ENCODE measurements at regions of chr22 and their contacts with region 1.

Region 1: GRCh38 chr22:43014869-43015676 is at the start of gene PACSIN2:
- DNase-seq: peak; percentile 93 to 99
- H3K4me3 ChIP-seq: peak within 1 kb of the TSS; percentile 67 to 87 (median 86)
- H3K27ac ChIP-seq: 0 out of 2 replicates have a peak within 1 kb of the TSS, but pooled peaks have one; percentile 51
- H3K4me1 ChIP-seq: peaks cover 7 to 16% (median 10%) of the 10 kb centered on the region in 4 experiments
- H3K27me3 ChIP-seq: peaks cover 0 to 5% (median 3%) of the 10 kb centered on the region in 4 experiments; a peak in 4 of 7 replicates
- CTCF ChIP-seq: no peak
- EP300 ChIP-seq: no peak
- POLR2A ChIP-seq: peak; percentile 97 to 100
- RAD21 ChIP-seq: no peak
- total RNA-seq, gene PACSIN2: 62.6 and 64.2 TPM in 2 replicates

Region 2: DNA sequence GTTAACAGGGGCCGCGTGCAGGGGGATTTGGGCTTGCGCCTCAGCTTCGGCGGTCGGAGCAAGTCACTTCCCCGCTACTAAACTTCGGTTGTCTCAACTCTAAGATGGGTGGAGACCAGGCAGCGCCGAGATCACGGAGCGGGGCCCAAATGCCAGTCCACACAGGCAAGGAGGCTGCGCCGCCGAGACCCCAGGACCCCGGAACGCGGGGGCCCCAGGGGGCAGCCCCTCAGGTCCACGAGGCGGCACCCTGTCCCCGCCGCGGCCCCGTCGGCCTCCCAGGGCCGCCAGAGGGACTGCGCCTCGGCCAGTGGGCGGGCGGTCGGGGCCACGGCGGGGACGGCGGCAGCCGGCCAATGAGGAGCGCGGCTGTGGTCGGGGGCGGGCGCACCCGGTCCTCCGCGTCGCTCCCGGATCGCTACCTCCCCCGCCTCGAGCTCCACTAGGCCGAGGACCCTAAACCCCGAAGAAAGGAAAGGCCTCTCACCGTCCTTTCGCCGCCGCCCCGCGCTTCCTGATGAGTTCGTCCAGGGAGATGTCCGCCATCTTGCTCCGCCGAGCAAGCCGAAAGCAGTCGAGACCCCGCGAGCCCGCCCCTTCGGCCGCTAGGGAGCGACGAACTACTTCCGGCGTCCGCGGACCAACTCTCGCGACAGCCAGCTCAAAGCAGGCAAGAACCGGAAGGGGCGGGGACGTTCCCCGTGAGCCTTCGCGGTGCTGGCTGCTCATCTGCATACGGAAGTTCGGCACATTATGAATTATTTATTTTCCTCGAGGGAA is 400.6 kb before region 1 on chr22 and contains the start of gene POLDIP3:
- CTCF ChIA-PET with region 1: no interaction called
- POLR2A ChIA-PET with region 1: interaction called, 17 read pairs
- DNase-seq: peak; percentile 98
- H3K4me3 ChIP-seq: peak within 1 kb of the TSS; percentile 62 to 98 (median 94)
- H3K27ac ChIP-seq: peak within 1 kb of the TSS; percentile 98
- H3K4me1 ChIP-seq: peaks cover 5 to 10% (median 9%) of the 10 kb centered on the region in 4 experiments
- H3K27me3 ChIP-seq: no peaks in the 10 kb centered on the region
- CTCF ChIP-seq: peak in 1 of 3 experiments; percentile 32; a peak in 1 of 4 replicates
- EP300 ChIP-seq: no peak
- POLR2A ChIP-seq: no peak; a peak in 1 of 3 replicates
- RAD21 ChIP-seq: no peak
- total RNA-seq, gene POLDIP3: 77.3 and 84.6 TPM in 2 replicates

Region 3: GRCh38 chr22:42844756-42845155 is 170.3 kb before region 1 on chr22:
- CTCF ChIA-PET with region 1: no interaction called
- POLR2A ChIA-PET with region 1: no interaction called
- DNase-seq: no peak
- H3K4me3 ChIP-seq: no peak overlapping the region
- H3K27ac ChIP-seq: no peak overlapping the region
- H3K4me1 ChIP-seq: no peaks in the 10 kb centered on the region
- H3K27me3 ChIP-seq: no peaks in the 10 kb centered on the region
- CTCF ChIP-seq: no peak
- EP300 ChIP-seq: no peak
- POLR2A ChIP-seq: no peak
- RAD21 ChIP-seq: no peak

Region 4: DNA sequence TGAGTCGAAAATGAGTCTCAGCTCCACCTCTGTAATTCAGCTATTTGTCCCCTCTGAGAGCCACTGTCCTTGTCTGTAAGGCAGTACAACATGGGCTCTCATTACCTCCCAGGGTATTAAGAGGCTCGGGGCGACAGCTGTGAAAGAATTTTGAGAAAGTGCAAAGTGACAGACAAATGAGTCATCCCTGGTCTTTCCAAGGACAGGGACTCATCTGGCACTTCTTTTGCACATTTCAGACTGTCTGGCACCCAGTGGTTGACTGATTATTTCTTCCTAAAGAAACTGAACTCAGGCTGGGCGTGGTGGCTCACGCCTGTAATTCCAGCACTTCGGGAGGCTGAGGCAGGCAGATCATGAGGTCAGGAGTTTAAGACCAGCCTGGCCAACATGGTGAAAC is 95.9 kb before region 1 on chr22:
- CTCF ChIA-PET with region 1: interaction called, 3 read pairs
- POLR2A ChIA-PET with region 1: interaction called, 20 read pairs
- DNase-seq: no peak
- H3K4me3 ChIP-seq: no peak overlapping the region
- H3K27ac ChIP-seq: no peak overlapping the region
- H3K4me1 ChIP-seq: peaks cover 13 to 26% (median 22%) of the 10 kb centered on the region in 4 experiments
- H3K27me3 ChIP-seq: no peaks in the 10 kb centered on the region
- CTCF ChIP-seq: no peak
- EP300 ChIP-seq: no peak
- POLR2A ChIP-seq: no peak
- RAD21 ChIP-seq: no peak

Region 5: DNA sequence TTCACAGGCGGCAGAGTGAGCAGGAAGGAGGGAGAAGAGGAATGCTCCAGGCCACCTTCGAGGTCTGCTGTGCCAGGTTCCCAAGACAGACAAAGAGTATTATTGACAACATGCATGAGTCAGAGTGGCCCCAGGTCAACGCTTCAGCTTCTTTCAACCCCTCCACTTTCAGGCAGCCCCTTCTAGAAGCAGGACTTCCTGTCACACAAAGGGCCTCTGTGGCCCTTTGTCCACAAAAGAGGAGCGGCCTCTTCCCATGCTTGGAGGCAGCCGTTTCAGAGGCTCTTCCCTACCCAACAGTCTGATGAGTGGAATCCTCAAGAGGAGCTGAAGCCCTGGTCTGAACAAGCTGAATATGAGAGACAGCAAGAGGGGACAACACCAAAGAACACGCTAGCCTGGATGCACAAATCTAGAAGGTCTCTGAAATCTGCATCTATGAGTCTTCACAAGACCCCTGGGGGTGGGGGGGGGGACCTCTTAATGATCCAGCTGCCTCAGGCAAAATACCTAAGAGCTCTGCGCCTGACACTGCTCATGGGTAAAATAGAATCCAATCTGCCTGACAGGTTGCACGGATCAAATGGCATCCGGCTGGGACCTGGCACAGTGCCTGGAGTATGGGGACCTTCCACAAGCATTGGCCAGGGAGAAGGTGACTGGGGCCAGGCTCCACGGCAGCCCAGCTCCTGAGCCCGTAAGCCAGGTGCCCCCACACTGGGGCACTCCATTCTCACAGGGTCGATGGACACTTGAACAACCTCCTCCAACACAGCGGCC is 67.7 kb before region 1 on chr22:
- CTCF ChIA-PET with region 1: interaction called, 4 read pairs
- POLR2A ChIA-PET with region 1: interaction called, 15 read pairs
- DNase-seq: no peak
- H3K4me3 ChIP-seq: no peak overlapping the region
- H3K27ac ChIP-seq: no peak overlapping the region
- H3K4me1 ChIP-seq: peaks cover 0 to 15% (median 7%) of the 10 kb centered on the region in 4 experiments; a peak in 6 of 7 replicates
- H3K27me3 ChIP-seq: no peaks in the 10 kb centered on the region
- CTCF ChIP-seq: no peak
- EP300 ChIP-seq: no peak
- POLR2A ChIP-seq: no peak
- RAD21 ChIP-seq: no peak

Region 6: DNA sequence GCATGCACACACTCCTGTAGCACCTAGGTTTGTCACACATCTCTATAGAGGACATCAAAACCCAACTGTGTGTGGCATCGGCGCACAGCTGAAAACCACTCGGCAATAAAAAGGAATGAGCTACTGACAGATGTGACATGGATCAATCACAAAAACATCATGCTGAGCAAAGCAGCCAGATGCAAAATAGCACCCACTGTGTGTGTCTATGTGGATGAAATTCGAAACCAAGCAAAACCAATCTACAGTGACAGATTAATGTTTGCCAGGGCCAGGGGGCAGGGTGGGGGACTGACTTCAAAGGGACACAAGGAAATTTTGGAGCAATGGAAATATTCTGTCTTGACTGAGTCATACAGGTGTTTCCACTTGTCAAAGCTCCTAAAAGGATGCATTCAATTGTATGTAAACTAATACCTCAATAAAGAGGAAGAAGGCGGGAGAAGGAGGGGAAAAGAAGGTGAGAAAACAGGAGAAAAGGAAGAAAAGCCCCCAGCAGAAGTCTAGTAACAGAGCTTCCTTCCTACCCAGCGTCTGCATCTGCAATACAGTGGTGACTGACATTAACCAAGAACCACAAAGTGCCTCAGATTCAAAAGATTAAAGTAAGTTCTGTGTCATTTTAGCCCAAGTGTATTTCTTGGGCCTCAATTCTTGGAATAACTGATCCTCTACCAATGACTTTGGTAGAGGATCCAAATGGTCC is 49.9 kb before region 1 on chr22:
- CTCF ChIA-PET with region 1: interaction called, 3 read pairs
- POLR2A ChIA-PET with region 1: interaction called, 15 read pairs
- DNase-seq: no peak
- H3K4me3 ChIP-seq: peak overlapping the region in 1 of 4 experiments; percentile 36; a peak in 3 of 8 replicates
- H3K27ac ChIP-seq: no peak overlapping the region
- H3K4me1 ChIP-seq: peaks cover 12 to 26% (median 24%) of the 10 kb centered on the region in 4 experiments
- H3K27me3 ChIP-seq: no peaks in the 10 kb centered on the region
- CTCF ChIP-seq: no peak
- EP300 ChIP-seq: peak in 1 of 2 experiments; percentile 16; a peak in 1 of 3 replicates
- POLR2A ChIP-seq: no peak
- RAD21 ChIP-seq: no peak

Region 7: DNA sequence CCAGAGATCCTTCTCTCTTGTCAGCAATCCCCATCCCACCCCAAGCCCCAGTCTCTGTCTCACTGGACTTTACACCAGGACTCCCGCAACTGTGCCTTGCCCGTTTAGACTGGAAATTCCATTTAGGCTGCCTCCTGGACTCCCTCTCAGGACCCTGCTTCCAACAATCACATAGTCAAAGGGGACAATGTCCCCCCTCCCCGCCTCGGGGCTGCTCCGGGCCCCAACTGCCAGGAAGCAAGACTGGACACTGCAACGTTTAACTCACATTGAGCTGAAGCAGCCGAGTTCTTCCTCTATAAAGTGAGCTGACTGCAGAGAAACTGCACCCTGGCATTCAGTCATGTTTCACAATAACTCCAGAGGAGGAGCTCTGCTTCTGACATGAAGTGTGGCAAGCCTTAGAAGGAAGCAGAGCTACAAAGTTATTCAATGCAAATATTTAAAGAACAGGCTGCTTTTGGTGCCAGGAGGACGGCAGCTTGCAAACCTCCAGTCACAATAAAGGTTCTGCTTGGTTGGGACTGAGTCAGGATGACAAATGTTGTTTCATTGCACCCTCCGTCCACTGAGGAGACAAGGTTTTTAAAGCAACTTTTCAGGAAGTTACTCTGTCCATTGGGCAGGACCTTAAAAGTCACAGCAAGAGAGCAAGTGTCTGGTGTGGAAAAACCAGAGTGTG is 20.1 kb before region 1 on chr22:
- CTCF ChIA-PET with region 1: interaction called, 4 read pairs
- POLR2A ChIA-PET with region 1: interaction called, 32 read pairs
- DNase-seq: no peak
- H3K4me3 ChIP-seq: no peak overlapping the region
- H3K27ac ChIP-seq: no peak overlapping the region
- H3K4me1 ChIP-seq: peaks cover 3 to 9% (median 4%) of the 10 kb centered on the region in 4 experiments; a peak in 6 of 7 replicates
- H3K27me3 ChIP-seq: no peaks in the 10 kb centered on the region
- CTCF ChIP-seq: no peak
- EP300 ChIP-seq: no peak
- POLR2A ChIP-seq: no peak
- RAD21 ChIP-seq: no peak

Region 8: GRCh38 chr22:43042101-43042780 is 27.2 kb after region 1 on chr22:
- CTCF ChIA-PET with region 1: no interaction called
- POLR2A ChIA-PET with region 1: interaction called, 11 read pairs
- DNase-seq: no peak
- H3K4me3 ChIP-seq: no peak overlapping the region
- H3K27ac ChIP-seq: no peak overlapping the region
- H3K4me1 ChIP-seq: peaks cover 0 to 3% (median 0%) of the 10 kb centered on the region in 4 experiments; a peak in 2 of 7 replicates
- H3K27me3 ChIP-seq: no peaks in the 10 kb centered on the region
- CTCF ChIP-seq: no peak
- EP300 ChIP-seq: no peak
- POLR2A ChIP-seq: no peak
- RAD21 ChIP-seq: no peak

Region 9: DNA sequence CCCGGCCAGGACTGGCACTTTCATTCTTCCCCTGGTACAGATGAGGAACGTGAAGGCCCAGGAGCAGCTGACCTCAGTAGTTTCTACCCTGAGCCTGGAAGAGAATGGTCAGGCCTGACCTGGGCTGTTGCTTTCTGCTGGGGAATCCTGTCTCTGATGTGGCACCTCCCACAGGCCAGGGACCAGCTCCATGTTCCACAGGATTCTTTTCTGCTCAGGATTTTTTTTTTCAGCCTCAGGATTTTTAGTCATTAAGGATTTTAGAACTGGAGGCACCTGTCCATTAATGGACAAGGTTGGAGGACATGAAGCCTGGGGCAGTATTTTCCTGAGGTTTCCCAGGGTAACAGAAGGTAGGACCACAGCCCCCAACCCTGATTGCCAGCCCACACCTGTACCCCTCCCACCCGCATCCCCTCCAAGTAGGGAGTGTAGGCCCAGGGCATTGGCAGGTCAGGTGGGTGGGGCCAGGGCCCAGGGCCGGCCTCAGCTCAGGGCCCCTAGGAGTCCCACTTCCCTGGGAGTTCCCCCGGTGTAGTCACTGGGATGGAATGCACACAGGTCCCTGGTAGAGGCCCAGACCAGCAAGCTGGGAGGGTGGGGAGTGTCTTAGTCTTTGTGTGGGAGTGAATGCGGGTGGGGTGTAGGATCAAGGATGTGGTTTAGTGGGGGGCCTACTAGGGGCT is 111.5 kb after region 1 on chr22:
- CTCF ChIA-PET with region 1: no interaction called
- POLR2A ChIA-PET with region 1: no interaction called
- DNase-seq: peak in 1 of 2 experiments; percentile 51
- H3K4me3 ChIP-seq: no peak overlapping the region
- H3K27ac ChIP-seq: no peak overlapping the region
- H3K4me1 ChIP-seq: peaks cover 0 to 6% (median 0%) of the 10 kb centered on the region in 4 experiments; a peak in 3 of 7 replicates
- H3K27me3 ChIP-seq: no peaks in the 10 kb centered on the region
- CTCF ChIP-seq: no peak
- EP300 ChIP-seq: no peak
- POLR2A ChIP-seq: no peak
- RAD21 ChIP-seq: no peak

Measured in H1 (cell line).